A673 (cell line): ENCODE measurements at regions of chr14 and their contacts with region 1.

Region 1: GRCh38 chr14:101761032-101761880 is at the start of gene PPP2R5C:
- DNase-seq: peak; percentile 89
- H3K4me3 ChIP-seq: peak within 1 kb of the TSS; percentile 94
- H3K27ac ChIP-seq: peak within 1 kb of the TSS; percentile 80
- H3K4me1 ChIP-seq: no peaks in the 10 kb centered on the region
- H3K27me3 ChIP-seq: peaks cover 2% of the 10 kb centered on the region
- CTCF ChIP-seq: no peak
- total RNA-seq, gene PPP2R5C: 113 and 124 TPM in 2 replicates

Region 2: GRCh38 chr14:101947906-101948665 is 186.8 kb after region 1 on chr14:
- CTCF ChIA-PET with region 1: no interaction called
- POLR2A ChIA-PET with region 1: interaction called, 3 read pairs
- intact Hi-C with region 1: loop called (anchors 5 kb)
- DNase-seq: peak; percentile 100
- H3K4me3 ChIP-seq: peak overlapping the region; percentile 81
- H3K27ac ChIP-seq: peak overlapping the region; percentile 98
- H3K4me1 ChIP-seq: no peaks in the 10 kb centered on the region
- H3K27me3 ChIP-seq: no peaks in the 10 kb centered on the region
- CTCF ChIP-seq: no peak

Region 3: GRCh38 chr14:102086972-102087761 is 325.9 kb after region 1 on chr14 and contains the start of gene HSP90AA1:
- CTCF ChIA-PET with region 1: no interaction called
- POLR2A ChIA-PET with region 1: no interaction called
- intact Hi-C with region 1: loop called (anchors 5 kb)
- DNase-seq: peak; percentile 97
- H3K4me3 ChIP-seq: peak within 1 kb of the TSS; percentile 77
- H3K27ac ChIP-seq: peak within 1 kb of the TSS; percentile 99
- H3K4me1 ChIP-seq: peaks cover 36% of the 10 kb centered on the region
- H3K27me3 ChIP-seq: no peaks in the 10 kb centered on the region
- CTCF ChIP-seq: 0 out of 2 replicates have a peak, but pooled peaks have one; percentile 33
- total RNA-seq, gene HSP90AA1: 1,040 and 1,112 TPM in 2 replicates